Activated CD8-positive, alpha-beta T cell treated with anti-CD3 and anti-CD28 coated beads for 36 hours (primary cell): ENCODE measurements at regions of chr9 and their contacts with region 1.

Region 1: DNA sequence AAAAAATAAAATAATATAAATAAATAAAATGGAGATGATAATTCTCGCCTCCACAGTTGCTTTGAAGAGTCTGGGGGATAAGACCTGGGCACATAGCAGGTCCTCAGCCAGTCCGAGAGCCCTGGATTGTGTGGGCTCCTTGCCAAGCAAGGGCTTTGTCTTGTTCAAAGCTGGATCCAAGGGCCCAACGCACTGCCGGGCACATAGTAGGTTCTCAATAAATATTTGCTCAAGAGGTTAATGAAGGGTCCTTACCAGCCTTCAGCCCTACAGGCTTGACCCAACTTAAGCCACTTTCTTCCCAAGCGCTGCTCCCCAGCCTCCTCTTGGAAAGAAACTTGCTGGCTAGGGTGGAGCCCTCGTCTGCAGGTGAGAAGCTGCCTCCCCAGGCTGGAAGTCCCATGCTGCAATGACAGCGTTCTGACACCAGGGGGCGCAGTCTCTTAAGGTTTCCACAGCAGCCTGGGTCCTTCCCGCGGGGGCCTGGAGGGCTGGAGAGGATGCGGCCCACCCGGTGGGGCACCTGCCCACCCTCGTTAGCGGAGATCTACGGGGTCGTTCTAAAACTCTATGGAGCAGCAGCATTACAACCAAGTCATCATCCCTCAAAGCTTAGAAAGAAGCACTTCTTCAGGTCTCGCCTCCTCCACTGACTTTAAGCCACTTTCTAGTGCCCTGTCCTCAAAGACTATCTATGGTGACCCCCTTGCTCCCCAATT is 115.2 kb downstream of the LHX2 start:
- DNase-seq: peak; percentile 87
- ATAC-seq: peak; percentile 73
- H3K4me3 Mint-ChIP-seq: no peak overlapping the region
- H3K27ac Mint-ChIP-seq: no peak overlapping the region
- H3K4me1 Mint-ChIP-seq: peaks cover 4% of the 10 kb centered on the region
- H3K27me3 Mint-ChIP-seq: peaks cover 10% of the 10 kb centered on the region
- CTCF ChIP-seq: peak; percentile 99

Region 2: GRCh38 chr9:124110307-124110915 is 16.3 kb before region 1 on chr9:
- CTCF ChIA-PET with region 1: interaction called, 23 read pairs
- POLR2A ChIA-PET with region 1: no interaction called
- intact Hi-C with region 1: no loop called
- DNase-seq: peak; percentile 72
- ATAC-seq: peak; percentile 68
- H3K4me3 Mint-ChIP-seq: no peak overlapping the region
- H3K27ac Mint-ChIP-seq: no peak overlapping the region
- H3K4me1 Mint-ChIP-seq: no peaks in the 10 kb centered on the region
- H3K27me3 Mint-ChIP-seq: peaks cover 12% of the 10 kb centered on the region
- CTCF ChIP-seq: no peak

Region 3: DNA sequence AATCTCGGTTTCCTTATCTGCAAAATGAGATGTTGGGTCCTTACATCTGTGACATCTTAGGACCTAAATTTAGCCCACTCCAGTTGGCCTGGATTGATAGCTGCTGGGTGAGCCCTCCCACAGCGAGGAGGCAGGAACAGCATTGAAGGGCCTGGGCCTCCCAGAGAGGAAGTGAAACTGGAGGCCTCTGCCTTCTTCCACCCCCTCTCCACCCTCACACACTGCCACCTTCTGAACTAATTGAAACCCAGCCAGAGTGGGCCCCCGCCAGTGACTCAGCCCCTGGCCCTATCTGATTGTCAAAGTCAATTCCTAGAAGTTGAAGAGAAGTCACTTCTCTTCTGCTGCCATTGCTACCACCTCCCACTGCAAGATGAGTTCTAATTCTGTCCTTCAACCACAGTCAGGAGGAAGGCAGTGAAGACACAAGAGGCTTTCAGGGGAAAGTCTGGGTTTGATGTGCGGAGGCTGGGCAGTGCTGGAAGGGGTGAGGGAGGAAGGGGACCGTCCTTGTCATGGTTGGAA is 75.8 kb after region 1 on chr9:
- CTCF ChIA-PET with region 1: no interaction called
- POLR2A ChIA-PET with region 1: no interaction called
- intact Hi-C with region 1: loop called (anchors 5 kb)
- DNase-seq: peak; percentile 98
- ATAC-seq: peak; percentile 94
- H3K4me3 Mint-ChIP-seq: peak overlapping the region; percentile 42
- H3K27ac Mint-ChIP-seq: peak overlapping the region; percentile 95
- H3K4me1 Mint-ChIP-seq: peaks cover 42% of the 10 kb centered on the region
- H3K27me3 Mint-ChIP-seq: peaks cover 6% of the 10 kb centered on the region
- CTCF ChIP-seq: no peak

Region 4: GRCh38 chr9:124257844-124258606 is 131.3 kb after region 1 on chr9 and contains the start of gene NEK6:
- CTCF ChIA-PET with region 1: interaction called, 10 read pairs
- POLR2A ChIA-PET with region 1: no interaction called
- intact Hi-C with region 1: loop called (anchors 5 kb)
- DNase-seq: peak; percentile 25
- ATAC-seq: peak; percentile 28
- H3K4me3 Mint-ChIP-seq: peak within 1 kb of the TSS; percentile 85
- H3K27ac Mint-ChIP-seq: peak within 1 kb of the TSS; percentile 88
- H3K4me1 Mint-ChIP-seq: peaks cover 53% of the 10 kb centered on the region
- H3K27me3 Mint-ChIP-seq: peaks cover 41% of the 10 kb centered on the region
- CTCF ChIP-seq: no peak
- total RNA-seq, gene NEK6: 20.2 to 21.8 TPM

Region 5: GRCh38 chr9:124306098-124306735 is 179.5 kb after region 1 on chr9:
- CTCF ChIA-PET with region 1: interaction called, 17 read pairs
- POLR2A ChIA-PET with region 1: no interaction called
- intact Hi-C with region 1: no loop called
- DNase-seq: no peak
- ATAC-seq: no peak
- H3K4me3 Mint-ChIP-seq: no peak overlapping the region
- H3K27ac Mint-ChIP-seq: no peak overlapping the region
- H3K4me1 Mint-ChIP-seq: peaks cover 2% of the 10 kb centered on the region
- H3K27me3 Mint-ChIP-seq: no peaks in the 10 kb centered on the region
- CTCF ChIP-seq: no peak

Region 6: GRCh38 chr9:124392871-124393460 is 266.2 kb after region 1 on chr9:
- CTCF ChIA-PET with region 1: interaction called, 11 read pairs
- POLR2A ChIA-PET with region 1: interaction called, 3 read pairs
- intact Hi-C with region 1: loop called (anchors 10 kb)
- DNase-seq: no peak
- ATAC-seq: no peak
- H3K4me3 Mint-ChIP-seq: no peak overlapping the region
- H3K27ac Mint-ChIP-seq: no peak overlapping the region
- H3K4me1 Mint-ChIP-seq: peaks cover 63% of the 10 kb centered on the region
- H3K27me3 Mint-ChIP-seq: no peaks in the 10 kb centered on the region
- CTCF ChIP-seq: no peak